Gastrocnemius medialis (tissue), 4 donors: ENCODE measurements at regions of chr2 and their contacts with region 1.

Region 1: GRCh38 chr2:174465327-174465726 is 21.5 kb downstream of the GPR155 start:
- DNase-seq: no peak
- ATAC-seq: no peak
- H3K4me3 ChIP-seq: no peak overlapping the region
- H3K27ac ChIP-seq: no peak overlapping the region
- H3K4me1 ChIP-seq: no peaks in the 10 kb centered on the region
- H3K27me3 ChIP-seq: no peaks in the 10 kb centered on the region
- CTCF ChIP-seq: no peak
- POLR2A ChIP-seq: no peak

Region 2: DNA sequence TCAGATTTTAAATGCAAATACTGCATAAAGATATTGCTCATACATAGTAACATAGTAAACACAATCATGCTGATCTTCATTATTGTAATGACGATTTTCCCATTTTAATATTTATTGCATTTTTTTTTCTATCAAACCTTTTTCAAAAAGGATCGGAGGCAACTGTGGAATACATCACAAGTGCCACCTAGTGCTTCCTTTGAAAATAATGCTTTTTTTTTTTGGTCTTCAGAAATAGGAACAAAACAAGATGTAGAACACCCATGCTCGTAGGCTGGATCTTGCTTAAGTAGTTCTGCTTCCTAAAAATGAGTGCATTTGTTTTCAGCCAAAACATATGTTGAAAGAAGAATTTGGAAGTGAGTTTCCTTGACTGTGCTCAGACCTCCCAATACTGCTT is 57.2 kb after region 1 on chr2:
- in situ Hi-C with region 1: loop called in 2 of 4 experiments (anchors 10 kb)
- intact Hi-C with region 1: loop called (anchors 2 kb)
- DNase-seq: no peak
- ATAC-seq: no peak
- H3K4me3 ChIP-seq: no peak overlapping the region
- H3K27ac ChIP-seq: no peak overlapping the region
- H3K4me1 ChIP-seq: no peaks in the 10 kb centered on the region
- H3K27me3 ChIP-seq: no peaks in the 10 kb centered on the region
- CTCF ChIP-seq: no peak
- POLR2A ChIP-seq: no peak

Region 3: GRCh38 chr2:174603280-174603679 is 138.0 kb after region 1 on chr2:
- in situ Hi-C with region 1: loop called in 1 of 4 experiments (anchors 5 kb)
- intact Hi-C with region 1: loop called (anchors 1 kb)
- DNase-seq: peak in 1 of 2 donors; percentile 39
- ATAC-seq: peak in 1 of 2 donors; percentile 79
- H3K4me3 ChIP-seq: no peak overlapping the region
- H3K27ac ChIP-seq: no peak overlapping the region
- H3K4me1 ChIP-seq: peaks cover 0 to 4% of the 10 kb centered on the region in 2 donors
- H3K27me3 ChIP-seq: no peaks in the 10 kb centered on the region
- CTCF ChIP-seq: peak in 3 of 5 experiments; percentile 22 to 48 (median 45)
- POLR2A ChIP-seq: no peak

Region 4: GRCh38 chr2:174688079-174688478 is 222.8 kb after region 1 on chr2:
- in situ Hi-C with region 1: loop called (anchors 5 to 25 kb)
- intact Hi-C with region 1: loop called (anchors 5 kb)
- DNase-seq: no peak
- ATAC-seq: no peak
- H3K4me3 ChIP-seq: no peak overlapping the region
- H3K27ac ChIP-seq: no peak overlapping the region
- H3K4me1 ChIP-seq: no peaks in the 10 kb centered on the region
- H3K27me3 ChIP-seq: peaks cover 0 to 8% (median 0%) of the 10 kb centered on the region in 3 donors
- CTCF ChIP-seq: peak in 3 of 5 experiments; percentile 9 to 28 (median 17)
- POLR2A ChIP-seq: no peak

Region 5: DNA sequence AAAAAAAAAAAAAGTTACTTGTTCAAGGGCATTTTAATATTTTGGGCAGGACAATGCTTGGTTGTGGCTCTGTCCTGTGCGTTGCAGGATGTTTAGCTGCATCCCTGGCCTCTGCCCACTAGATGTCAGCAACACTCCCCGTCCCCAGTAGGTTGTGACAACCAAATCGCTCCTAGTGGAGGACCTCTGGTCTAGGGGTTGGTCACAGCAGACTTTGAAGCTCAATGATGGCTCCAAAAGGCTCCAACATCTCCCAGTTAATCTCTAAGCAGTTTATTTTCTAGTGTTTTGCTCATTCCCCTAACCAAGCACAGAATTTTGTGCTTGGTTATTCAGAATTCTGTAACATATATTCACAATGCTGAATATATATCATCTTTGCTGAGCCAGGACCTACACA is 231.9 kb after region 1 on chr2:
- in situ Hi-C with region 1: loop called in 3 of 4 experiments (anchors 10 to 25 kb)
- intact Hi-C with region 1: loop called (anchors 5 kb)
- DNase-seq: no peak
- ATAC-seq: peak in 1 of 2 donors; percentile 44
- H3K4me3 ChIP-seq: no peak overlapping the region
- H3K27ac ChIP-seq: no peak overlapping the region
- H3K4me1 ChIP-seq: no peaks in the 10 kb centered on the region
- H3K27me3 ChIP-seq: no peaks in the 10 kb centered on the region
- CTCF ChIP-seq: peak in 4 of 5 experiments; percentile 10 to 72 (median 46)
- POLR2A ChIP-seq: no peak